ENCODE measurements at regions of chr11 and their contacts with region 1.

Region 1: GRCh38 chr11:19240420-19241259 is at the start of gene E2F8:
- DNase-seq: peak; percentile 94
- ATAC-seq: peak; percentile 98 to 99
- total RNA-seq, gene E2F8: 3.4 to 4.2 TPM

Region 2: DNA sequence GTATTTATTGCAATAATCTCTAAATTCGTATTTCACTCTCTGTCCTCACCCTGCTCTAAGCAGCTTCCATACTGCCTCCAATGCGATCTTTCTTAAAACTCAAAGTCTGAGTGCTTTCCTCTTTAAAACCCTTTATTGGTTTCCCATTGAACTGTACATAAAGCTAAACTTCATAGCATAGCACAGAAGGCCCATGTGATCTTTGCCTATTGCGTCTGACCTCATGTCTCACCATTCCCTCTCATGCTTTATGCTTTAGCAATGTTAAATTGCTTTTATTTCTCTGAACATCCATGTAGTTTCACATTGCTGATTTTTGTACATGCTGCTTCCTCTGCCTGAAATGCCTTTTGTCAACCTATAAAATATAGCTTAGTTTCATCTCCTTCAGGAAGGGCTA is 95.3 kb before region 1 on chr11:
- intact Hi-C with region 1: no loop called
- DNase-seq: no peak
- ATAC-seq: no peak

Region 3: DNA sequence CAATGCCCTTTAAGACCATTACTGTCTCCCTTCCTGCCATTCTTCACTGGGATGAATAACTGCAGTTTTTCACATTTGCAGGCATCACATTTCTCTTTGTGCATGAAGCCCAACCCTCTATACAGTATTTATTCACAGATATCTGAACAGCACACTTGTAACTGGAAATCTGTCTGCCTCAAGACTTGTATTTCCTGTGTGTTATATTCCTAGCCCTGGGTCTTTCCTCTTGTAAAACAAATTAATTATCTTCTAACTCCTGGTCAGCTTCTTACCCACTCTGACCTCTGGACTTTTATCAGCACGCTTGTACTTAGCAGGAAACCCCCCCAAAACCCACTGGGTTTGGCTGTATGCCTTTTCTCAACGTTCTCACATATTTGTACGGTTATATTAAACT is 40.9 kb before region 1 on chr11:
- intact Hi-C with region 1: loop called in 1 of 2 experiments (anchors 5 kb)
- DNase-seq: no peak
- ATAC-seq: no peak

Region 4: GRCh38 chr11:19290356-19290755 is 49.7 kb after region 1 on chr11:
- intact Hi-C with region 1: no loop called
- DNase-seq: no peak
- ATAC-seq: no peak

Measured in left cardiac atrium (tissue), 4 donors.